ENCODE measurements at regions of chr17 and their contacts with region 1.

Region 1: DNA sequence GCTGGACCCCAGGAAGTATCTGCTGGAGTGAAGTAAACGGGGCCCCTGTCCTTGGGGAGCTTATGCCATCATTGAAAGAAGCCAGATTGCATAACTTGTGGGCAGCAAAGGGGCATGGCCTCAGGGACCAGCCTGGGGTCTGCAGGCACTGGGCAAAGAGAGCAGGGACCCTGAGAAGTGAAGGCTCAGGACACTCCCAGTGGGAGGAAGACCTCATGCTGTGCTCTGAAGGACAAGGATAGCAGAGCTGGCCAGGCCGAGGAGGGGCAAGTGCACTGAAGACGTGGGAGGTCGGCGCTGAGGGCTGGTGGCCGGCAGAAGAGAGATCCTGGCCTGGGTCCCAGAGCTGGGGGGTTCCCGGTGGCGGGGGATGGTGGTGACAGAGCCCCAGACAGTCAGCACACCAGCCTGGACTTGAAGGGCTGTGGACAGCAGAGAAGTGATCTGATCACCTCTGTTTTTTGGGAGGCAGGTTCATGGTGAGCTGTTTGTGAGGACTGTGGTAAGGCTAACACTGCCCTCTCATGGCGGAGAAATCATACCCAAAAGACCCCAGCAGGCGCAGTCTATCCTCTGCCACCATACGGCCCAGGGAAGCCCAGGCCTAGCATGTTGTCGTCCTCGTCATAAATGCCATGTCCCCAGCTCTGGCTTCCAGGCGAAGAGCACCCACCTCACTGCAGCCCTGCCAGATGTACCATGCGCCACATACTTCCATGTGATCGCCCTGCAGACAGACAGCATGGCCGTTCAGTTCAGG is 7.1 kb upstream of the CNP start:
- DNase-seq: peak; percentile 36
- H3K4me3 ChIP-seq: no peak overlapping the region
- H3K27ac ChIP-seq: no peak overlapping the region
- H3K4me1 ChIP-seq: peaks cover 9% of the 10 kb centered on the region
- H3K27me3 ChIP-seq: no peaks in the 10 kb centered on the region
- CTCF ChIP-seq: peak; percentile 20 to 51
- POLR2A ChIP-seq: no peak

Region 2: GRCh38 chr17:41710468-41711090 is 248.9 kb before region 1 on chr17:
- CTCF ChIA-PET with region 1: no interaction called
- POLR2A ChIA-PET with region 1: no interaction called
- dilution Hi-C with region 1: no loop called
- intact Hi-C with region 1: no loop called
- DNase-seq: peak; percentile 35
- H3K4me3 ChIP-seq: no peak overlapping the region
- H3K27ac ChIP-seq: no peak overlapping the region
- H3K4me1 ChIP-seq: no peaks in the 10 kb centered on the region
- H3K27me3 ChIP-seq: peaks cover 6 to 8% of the 10 kb centered on the region in 2 experiments
- CTCF ChIP-seq: no peak
- POLR2A ChIP-seq: no peak

Region 3: DNA sequence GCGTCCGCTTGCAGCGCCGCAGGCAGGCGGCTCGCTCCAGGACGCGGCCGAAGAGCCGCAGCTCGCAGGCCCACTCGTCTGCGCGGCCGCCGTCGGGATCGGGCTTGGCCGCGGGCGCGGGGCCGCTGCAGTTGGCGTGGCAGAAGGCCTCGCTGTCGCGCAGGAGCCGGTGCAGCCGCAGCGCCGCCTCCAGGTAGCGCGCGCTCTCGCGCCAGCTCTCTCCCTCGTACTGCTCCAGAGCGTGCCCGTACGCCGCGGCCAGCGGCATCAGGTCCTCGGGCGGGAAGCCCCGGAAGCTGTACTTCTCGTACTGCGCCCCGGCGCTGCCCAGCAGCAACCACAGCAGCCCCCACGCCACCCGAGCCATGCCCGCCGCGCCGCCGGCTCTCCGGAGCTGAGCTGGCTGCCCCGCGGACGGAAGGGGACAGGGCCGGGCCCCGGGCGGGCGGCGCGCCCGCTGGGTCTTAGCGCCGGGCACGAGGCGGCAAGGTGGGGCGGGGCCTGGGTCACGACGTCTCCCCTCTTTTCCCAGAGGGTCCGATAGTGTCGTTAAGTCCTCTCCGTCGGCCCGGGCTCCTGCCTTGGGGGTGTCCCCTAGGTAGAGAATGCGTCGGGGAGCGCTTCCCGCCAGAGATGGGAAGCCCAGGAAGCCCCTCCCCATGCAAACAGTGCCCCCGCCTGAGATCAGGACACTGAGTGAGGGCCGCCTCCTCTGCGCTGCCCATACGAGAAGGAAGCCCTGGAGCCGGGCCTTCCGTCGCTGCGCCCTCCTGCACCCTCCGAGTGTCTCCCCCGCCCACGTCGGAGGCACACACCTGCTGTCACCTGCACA is 147.8 kb before region 1 on chr17 and contains the start of gene P3H4:
- CTCF ChIA-PET with region 1: no interaction called
- POLR2A ChIA-PET with region 1: no interaction called
- dilution Hi-C with region 1: no loop called
- intact Hi-C with region 1: loop called (anchors 5 kb)
- DNase-seq: peak; percentile 84
- H3K4me3 ChIP-seq: peak within 1 kb of the TSS; percentile 51 to 81 (median 78)
- H3K27ac ChIP-seq: peak within 1 kb of the TSS; percentile 46
- H3K4me1 ChIP-seq: peaks cover 26% of the 10 kb centered on the region
- H3K27me3 ChIP-seq: no peaks in the 10 kb centered on the region
- CTCF ChIP-seq: peak; percentile 60 to 85
- POLR2A ChIP-seq: peak; percentile 90
- total RNA-seq, gene P3H4: 37.1 and 39.2 TPM in 2 replicates

Region 4: DNA sequence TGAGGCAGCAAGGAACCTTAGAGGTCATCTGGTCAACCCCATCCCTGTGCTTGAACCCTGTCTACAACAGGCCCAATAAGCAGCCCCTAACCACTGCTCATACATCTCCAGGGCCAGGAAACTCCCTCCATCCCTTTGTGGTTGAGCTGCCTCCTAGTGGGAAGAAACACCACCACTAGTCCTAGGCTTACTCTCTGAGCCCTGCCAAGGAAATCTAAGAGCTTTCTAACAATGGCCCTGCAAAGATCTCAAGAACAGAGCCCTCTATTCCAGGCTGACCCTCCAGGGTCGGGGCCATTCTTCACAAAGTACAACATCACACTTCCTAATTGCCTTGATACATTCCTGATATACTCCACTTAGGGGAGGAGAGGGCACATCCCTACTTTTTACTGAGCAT is 46.6 kb before region 1 on chr17:
- CTCF ChIA-PET with region 1: interaction called, 26 read pairs
- POLR2A ChIA-PET with region 1: no interaction called
- dilution Hi-C with region 1: no loop called
- intact Hi-C with region 1: no loop called
- DNase-seq: no peak
- H3K4me3 ChIP-seq: no peak overlapping the region
- H3K27ac ChIP-seq: no peak overlapping the region
- H3K4me1 ChIP-seq: peaks cover 14% of the 10 kb centered on the region
- H3K27me3 ChIP-seq: no peaks in the 10 kb centered on the region
- CTCF ChIP-seq: no peak
- POLR2A ChIP-seq: no peak

Region 5: GRCh38 chr17:41918314-41919164 is 41.0 kb before region 1 on chr17 and contains the start of gene ACLY:
- CTCF ChIA-PET with region 1: interaction called, 26 read pairs
- POLR2A ChIA-PET with region 1: interaction called, 3 read pairs
- dilution Hi-C with region 1: no loop called
- intact Hi-C with region 1: loop called (anchors 1 kb)
- DNase-seq: peak; percentile 96
- H3K4me3 ChIP-seq: peak within 1 kb of the TSS; percentile 41 to 88 (median 85)
- H3K27ac ChIP-seq: peak within 1 kb of the TSS; percentile 76
- H3K4me1 ChIP-seq: peaks cover 20% of the 10 kb centered on the region
- H3K27me3 ChIP-seq: no peaks in the 10 kb centered on the region
- CTCF ChIP-seq: no peak
- POLR2A ChIP-seq: peak; percentile 97
- total RNA-seq, gene ACLY: 324 and 329 TPM in 2 replicates

Region 6: DNA sequence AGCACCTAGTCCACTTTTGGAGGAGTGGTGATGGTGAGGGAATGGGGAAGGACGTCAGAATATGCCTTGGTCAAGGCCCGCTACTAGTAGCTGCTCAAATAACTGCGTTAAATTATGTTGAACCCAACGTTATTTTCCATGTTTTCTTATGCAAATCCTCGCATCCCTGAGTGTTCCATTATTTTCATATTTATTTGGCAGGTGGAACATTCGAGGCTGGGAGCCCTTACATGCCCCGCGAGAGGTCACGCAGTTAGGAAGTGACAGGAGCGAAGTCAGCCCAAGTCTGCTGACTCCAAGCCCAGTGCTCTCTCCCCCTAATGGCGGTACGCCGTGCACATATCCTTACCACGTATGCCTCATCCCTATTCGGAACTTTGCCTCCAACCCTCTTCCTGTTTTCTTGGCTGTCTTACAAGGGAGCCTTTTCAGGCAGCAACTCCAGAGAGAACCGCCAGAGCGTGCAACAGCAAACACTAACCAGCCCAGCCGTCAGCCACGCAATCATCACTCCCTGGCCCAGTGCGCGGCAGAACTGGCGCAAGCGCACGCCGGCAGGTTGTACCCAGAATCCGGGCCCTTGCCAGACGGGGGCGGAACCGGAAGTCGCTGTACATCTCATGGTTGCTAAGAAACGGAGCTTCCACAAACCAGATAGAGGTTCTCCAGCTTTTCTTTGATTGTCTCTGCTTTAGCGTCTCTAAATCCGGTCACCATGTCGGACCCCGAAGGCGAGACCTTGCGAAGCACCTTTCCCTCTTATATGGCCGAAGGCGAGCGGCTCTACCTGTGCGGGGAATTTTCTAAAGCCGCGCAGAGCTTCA is 29.3 kb before region 1 on chr17 and contains the start of gene ODAD4:
- CTCF ChIA-PET with region 1: interaction called, 28 read pairs
- POLR2A ChIA-PET with region 1: interaction called, 3 read pairs
- dilution Hi-C with region 1: no loop called
- intact Hi-C with region 1: loop called (anchors 1 kb)
- DNase-seq: peak; percentile 99
- H3K4me3 ChIP-seq: peak within 1 kb of the TSS in 2 of 3 experiments; percentile 25 to 51
- H3K27ac ChIP-seq: peak within 1 kb of the TSS; percentile 50
- H3K4me1 ChIP-seq: peaks cover 8% of the 10 kb centered on the region
- H3K27me3 ChIP-seq: peaks cover 0 to 3% of the 10 kb centered on the region in 2 experiments
- CTCF ChIP-seq: peak; percentile 44 to 59
- POLR2A ChIP-seq: peak; percentile 84
- total RNA-seq, gene ODAD4: 0.60 and 1.0 TPM in 2 replicates

Region 7: GRCh38 chr17:41948762-41949460 is 10.6 kb before region 1 on chr17:
- CTCF ChIA-PET with region 1: interaction called, 14 read pairs
- POLR2A ChIA-PET with region 1: no interaction called
- dilution Hi-C with region 1: no loop called
- intact Hi-C with region 1: no loop called
- DNase-seq: no peak
- H3K4me3 ChIP-seq: no peak overlapping the region
- H3K27ac ChIP-seq: no peak overlapping the region
- H3K4me1 ChIP-seq: no peaks in the 10 kb centered on the region
- H3K27me3 ChIP-seq: no peaks in the 10 kb centered on the region
- CTCF ChIP-seq: no peak
- POLR2A ChIP-seq: no peak

Measured in endothelial cell of umbilical vein (primary cell).